ENCODE measurements at regions of chr21 and their contacts with region 1.

Region 1: GRCh38 chr21:35232545-35233176 is 183.6 kb upstream of the RUNX1 start:
- DNase-seq: peak; percentile 68
- H3K4me3 Mint-ChIP-seq: no peak overlapping the region
- H3K27ac Mint-ChIP-seq: peak overlapping the region; percentile 77
- H3K4me1 Mint-ChIP-seq: peaks cover 30% of the 10 kb centered on the region
- H3K27me3 Mint-ChIP-seq: no peaks in the 10 kb centered on the region
- CTCF ChIP-seq: no peak

Region 2: GRCh38 chr21:35217504-35218060 is 15.1 kb before region 1 on chr21:
- CTCF ChIA-PET with region 1: interaction called, 11 read pairs
- intact Hi-C with region 1: no loop called
- DNase-seq: peak; percentile 79
- H3K4me3 Mint-ChIP-seq: no peak overlapping the region
- H3K27ac Mint-ChIP-seq: peak overlapping the region; percentile 95
- H3K4me1 Mint-ChIP-seq: peaks cover 46% of the 10 kb centered on the region
- H3K27me3 Mint-ChIP-seq: no peaks in the 10 kb centered on the region
- CTCF ChIP-seq: no peak

Measured in Calu3 (cell line).